Body of pancreas (tissue), 4 donors: ENCODE measurements at regions of chr19 and their contacts with region 1.

Region 1: GRCh38 chr19:39532233-39533002 is at the start of gene EID2B:
- DNase-seq: peak; percentile 96 to 98 (median 96)
- ATAC-seq: peak; percentile 100
- H3K4me3 ChIP-seq: peak within 1 kb of the TSS; percentile 75 to 97
- H3K27ac ChIP-seq: peak within 1 kb of the TSS in 3 of 4 donors; percentile 44 to 75 (median 66)
- H3K4me1 ChIP-seq: peaks cover 12% of the 10 kb centered on the region
- H3K27me3 ChIP-seq: no peaks in the 10 kb centered on the region
- CTCF ChIP-seq: peak; percentile 95 to 100 (median 99)
- POLR2A ChIP-seq: peak in 2 of 3 donors; percentile 47 to 53
- total RNA-seq, gene EID2B: 2.0 to 3.9 TPM

Region 2: DNA sequence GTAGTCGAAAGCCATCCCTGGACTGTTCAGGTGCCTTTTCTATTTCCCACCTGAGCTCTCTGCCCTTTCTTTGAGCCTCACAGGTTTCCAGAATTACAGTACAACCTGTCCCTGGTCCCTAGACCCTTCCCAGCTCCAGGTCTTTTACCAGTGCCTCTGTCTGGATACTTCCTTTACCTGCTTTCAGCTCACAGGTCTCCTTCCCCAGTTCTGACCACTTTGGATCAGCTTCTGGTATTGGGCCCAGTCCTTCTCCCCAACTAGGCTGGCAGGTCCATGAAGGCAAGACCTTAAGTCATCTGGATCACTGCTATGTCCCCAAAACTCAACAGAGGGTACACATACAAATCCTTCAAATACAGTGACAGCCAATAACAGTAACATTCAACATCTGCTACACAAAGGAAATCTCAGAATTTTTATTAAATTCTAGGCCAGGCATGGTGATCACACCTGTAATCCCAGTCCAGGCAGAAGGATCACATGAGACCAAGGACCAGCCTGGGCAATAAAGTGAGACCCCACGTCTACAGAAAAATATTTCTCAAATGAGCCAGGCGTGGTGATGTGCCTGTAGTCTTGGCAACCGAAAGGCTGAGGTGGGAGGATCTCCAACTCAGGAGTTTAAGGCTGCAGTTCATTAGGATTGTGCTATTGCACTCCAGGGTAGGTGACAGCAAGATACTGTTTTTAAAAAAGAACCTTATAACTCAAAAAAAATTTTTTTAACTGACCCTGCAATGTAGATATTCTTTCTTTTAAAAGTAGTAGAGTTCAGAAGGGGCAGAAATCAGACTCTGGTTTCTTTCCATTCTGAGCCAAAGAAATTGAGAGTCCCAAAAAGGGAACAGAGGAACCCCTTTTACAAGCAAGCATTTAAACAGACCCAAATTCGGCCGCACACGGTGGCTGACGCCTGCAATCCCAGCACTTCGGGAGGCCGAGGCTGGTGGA is 98.0 kb before region 1 on chr19:
- intact Hi-C with region 1: no loop called
- DNase-seq: no peak
- ATAC-seq: no peak
- H3K4me3 ChIP-seq: peak overlapping the region; percentile 41 to 98
- H3K27ac ChIP-seq: peak overlapping the region in 2 of 4 donors; percentile 78 to 86
- H3K4me1 ChIP-seq: peaks cover 28% of the 10 kb centered on the region
- H3K27me3 ChIP-seq: no peaks in the 10 kb centered on the region
- CTCF ChIP-seq: no peak
- POLR2A ChIP-seq: no peak

Region 3: DNA sequence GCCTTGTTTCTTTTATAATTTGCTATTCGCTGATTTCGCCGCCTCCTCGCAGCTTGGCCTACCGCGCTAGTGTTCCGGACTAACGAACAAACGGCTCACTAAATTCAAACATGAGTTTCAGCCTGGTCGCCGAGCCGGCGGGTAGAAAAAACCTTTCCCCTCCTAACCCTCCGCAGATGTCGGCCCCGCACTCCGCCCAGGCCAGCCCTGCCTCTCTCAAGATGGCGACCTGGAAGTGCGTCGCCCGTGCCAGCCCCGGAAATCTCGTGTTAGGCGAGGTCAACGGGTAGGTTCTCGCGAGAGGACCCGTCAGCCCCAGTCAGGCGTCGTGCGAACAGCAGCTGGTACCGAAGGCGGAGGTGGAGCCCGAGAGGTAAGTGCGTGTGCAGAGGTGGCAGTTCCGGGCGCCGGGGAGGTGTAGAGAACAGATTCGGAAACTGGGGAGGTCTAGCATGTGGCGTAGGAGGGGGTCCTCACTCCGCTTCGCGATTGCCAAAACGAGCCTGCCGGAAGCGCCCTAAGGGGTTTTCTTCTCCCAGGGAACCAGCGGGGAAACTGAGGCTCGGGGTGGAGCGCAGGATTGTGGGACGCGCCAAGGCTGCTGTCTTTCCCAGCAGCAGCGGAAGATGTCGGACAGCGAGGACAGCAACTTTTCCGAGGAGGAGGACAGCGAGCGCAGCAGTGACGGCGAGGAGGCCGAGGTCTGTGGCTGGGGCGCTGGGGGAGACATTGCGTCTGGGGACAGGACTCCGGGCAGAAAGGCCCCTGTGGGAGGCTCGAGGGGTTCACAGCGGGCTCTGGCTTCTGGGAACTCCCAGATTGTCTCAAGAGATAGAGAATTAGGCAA is 86.9 kb before region 1 on chr19 and contains the start of gene SUPT5H:
- intact Hi-C with region 1: loop called (anchors 10 kb)
- DNase-seq: peak; percentile 98 to 99 (median 99)
- ATAC-seq: peak; percentile 100
- H3K4me3 ChIP-seq: peak within 1 kb of the TSS; percentile 93 to 94
- H3K27ac ChIP-seq: peak within 1 kb of the TSS; percentile 72 to 96 (median 86)
- H3K4me1 ChIP-seq: peaks cover 48% of the 10 kb centered on the region
- H3K27me3 ChIP-seq: no peaks in the 10 kb centered on the region
- CTCF ChIP-seq: peak in 1 of 7 experiments; percentile 19
- POLR2A ChIP-seq: peak; percentile 81 to 96 (median 94)
- total RNA-seq, gene SUPT5H: 82.0 to 90.3 TPM

Region 4: GRCh38 chr19:39474139-39474622 is 58.2 kb before region 1 on chr19:
- intact Hi-C with region 1: loop called (anchors 10 kb)
- DNase-seq: peak; percentile 45 to 67 (median 53)
- ATAC-seq: peak; percentile 55
- H3K4me3 ChIP-seq: no peak overlapping the region
- H3K27ac ChIP-seq: no peak overlapping the region
- H3K4me1 ChIP-seq: no peaks in the 10 kb centered on the region
- H3K27me3 ChIP-seq: no peaks in the 10 kb centered on the region
- CTCF ChIP-seq: peak; percentile 48 to 76 (median 70)
- POLR2A ChIP-seq: no peak

Region 5: GRCh38 chr19:40023969-40024368 is 491.6 kb after region 1 on chr19:
- intact Hi-C with region 1: no loop called
- DNase-seq: no peak
- ATAC-seq: no peak
- H3K4me3 ChIP-seq: no peak overlapping the region
- H3K27ac ChIP-seq: no peak overlapping the region
- H3K4me1 ChIP-seq: no peaks in the 10 kb centered on the region
- H3K27me3 ChIP-seq: no peaks in the 10 kb centered on the region
- CTCF ChIP-seq: no peak
- POLR2A ChIP-seq: no peak